Heart left ventricle (tissue), 16 donors: ENCODE measurements at regions of chr5 and their contacts with region 1.

Region 1: GRCh38 chr5:61357745-61358144 is 25.7 kb downstream of the ZSWIM6 start:
- DNase-seq: no peak
- ATAC-seq: no peak
- H3K4me3 ChIP-seq: no peak overlapping the region
- H3K27ac ChIP-seq: no peak overlapping the region
- H3K4me1 ChIP-seq: peaks cover 0 to 29% (median 9%) of the 10 kb centered on the region in 12 donors
- H3K27me3 ChIP-seq: no peaks in the 10 kb centered on the region
- CTCF ChIP-seq: peak in 4 of 12 donors; percentile 14 to 29 (median 22)
- POLR2A ChIP-seq: no peak

Region 2: GRCh38 chr5:60944904-60945812 is 412.6 kb before region 1 on chr5 and contains the starts of genes ERCC8 and NDUFAF2:
- intact Hi-C with region 1: loop called in 1 of 10 experiments (anchors 10 kb)
- DNase-seq: peak; percentile 92 to 95 (median 93)
- ATAC-seq: peak; percentile 99 to 100 (median 100)
- H3K4me3 ChIP-seq: peak within 1 kb of the TSS; percentile 57 to 88 (median 69)
- H3K27ac ChIP-seq: peak within 1 kb of the TSS; percentile 11 to 84 (median 76)
- H3K4me1 ChIP-seq: peaks cover 0 to 28% (median 18%) of the 10 kb centered on the region in 12 donors
- H3K27me3 ChIP-seq: no peaks in the 10 kb centered on the region
- CTCF ChIP-seq: no peak
- POLR2A ChIP-seq: peak in 1 of 2 donors; percentile 61
- total RNA-seq, gene ERCC8: 5.0 to 10.1 (median 6.1) TPM
- total RNA-seq, gene NDUFAF2: 22.9 to 50.1 (median 34.4) TPM

Region 3: DNA sequence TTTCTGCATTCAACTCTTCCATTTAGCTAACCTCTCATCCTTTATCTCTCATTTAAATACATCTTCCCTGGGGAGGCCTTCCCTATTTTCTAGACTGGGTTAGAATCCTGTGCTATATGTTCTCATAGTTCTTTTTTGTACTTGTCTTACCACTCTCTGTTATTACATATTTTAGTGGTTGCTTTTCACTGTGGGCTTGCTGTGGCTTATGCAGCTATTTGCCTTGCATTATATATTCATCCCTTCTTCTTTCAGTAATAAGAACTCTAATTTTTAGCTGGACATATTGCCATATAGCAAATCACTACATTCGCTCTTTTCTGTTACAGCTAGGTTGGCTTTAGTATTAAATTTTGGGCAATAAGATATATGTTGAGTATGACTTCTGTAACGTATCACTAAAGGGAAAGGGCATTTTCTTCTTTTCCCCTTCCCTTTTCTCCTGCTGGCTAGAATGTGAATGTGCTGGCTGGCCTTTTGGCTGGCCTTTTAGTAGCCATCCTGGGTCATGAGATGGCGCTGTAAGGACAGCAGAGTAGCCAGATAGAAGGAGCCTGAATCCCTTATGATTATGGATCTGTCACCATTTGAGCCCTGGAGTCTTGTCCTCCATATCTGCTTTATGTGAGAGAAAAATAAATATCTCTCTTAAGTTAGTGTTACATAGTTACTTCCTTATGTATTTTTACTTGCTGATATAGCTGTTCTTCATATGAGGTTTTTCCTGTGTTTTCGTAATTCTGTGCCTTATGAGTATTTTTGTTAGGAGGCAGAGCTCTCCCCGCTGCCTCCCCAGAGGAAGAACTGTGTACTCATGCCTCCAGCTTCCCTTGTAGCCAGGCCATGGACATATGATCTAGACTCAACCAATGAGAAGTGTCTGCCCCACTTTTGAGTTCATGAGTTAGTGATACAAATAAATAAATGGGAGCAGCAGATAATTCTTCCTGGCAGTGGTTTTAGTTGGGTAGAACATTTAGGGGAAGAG is 347.0 kb before region 1 on chr5:
- intact Hi-C with region 1: no loop called
- DNase-seq: no peak
- ATAC-seq: peak in 1 of 4 donors; percentile 45
- H3K4me3 ChIP-seq: no peak overlapping the region
- H3K27ac ChIP-seq: peak overlapping the region in 1 of 12 donors; percentile 43
- H3K4me1 ChIP-seq: peaks cover 0 to 10% (median 0%) of the 10 kb centered on the region in 12 donors
- H3K27me3 ChIP-seq: no peaks in the 10 kb centered on the region
- CTCF ChIP-seq: no peak
- POLR2A ChIP-seq: no peak